ENCODE measurements at regions of chr3 and their contacts with region 1.

Region 1: GRCh38 chr3:194472290-194472920 is 14.4 kb downstream of the ATP13A3 start:
- DNase-seq: no peak
- ATAC-seq: peak in 3 of 4 donors; percentile 41 to 54 (median 51)
- H3K4me3 ChIP-seq: no peak overlapping the region
- H3K27ac ChIP-seq: peak overlapping the region in 3 of 12 donors; percentile 5 to 22 (median 16)
- H3K4me1 ChIP-seq: peaks cover 0 to 81% (median 54%) of the 10 kb centered on the region in 12 donors
- H3K27me3 ChIP-seq: no peaks in the 10 kb centered on the region
- CTCF ChIP-seq: peak; percentile 93 to 99 (median 97)
- POLR2A ChIP-seq: no peak

Region 2: DNA sequence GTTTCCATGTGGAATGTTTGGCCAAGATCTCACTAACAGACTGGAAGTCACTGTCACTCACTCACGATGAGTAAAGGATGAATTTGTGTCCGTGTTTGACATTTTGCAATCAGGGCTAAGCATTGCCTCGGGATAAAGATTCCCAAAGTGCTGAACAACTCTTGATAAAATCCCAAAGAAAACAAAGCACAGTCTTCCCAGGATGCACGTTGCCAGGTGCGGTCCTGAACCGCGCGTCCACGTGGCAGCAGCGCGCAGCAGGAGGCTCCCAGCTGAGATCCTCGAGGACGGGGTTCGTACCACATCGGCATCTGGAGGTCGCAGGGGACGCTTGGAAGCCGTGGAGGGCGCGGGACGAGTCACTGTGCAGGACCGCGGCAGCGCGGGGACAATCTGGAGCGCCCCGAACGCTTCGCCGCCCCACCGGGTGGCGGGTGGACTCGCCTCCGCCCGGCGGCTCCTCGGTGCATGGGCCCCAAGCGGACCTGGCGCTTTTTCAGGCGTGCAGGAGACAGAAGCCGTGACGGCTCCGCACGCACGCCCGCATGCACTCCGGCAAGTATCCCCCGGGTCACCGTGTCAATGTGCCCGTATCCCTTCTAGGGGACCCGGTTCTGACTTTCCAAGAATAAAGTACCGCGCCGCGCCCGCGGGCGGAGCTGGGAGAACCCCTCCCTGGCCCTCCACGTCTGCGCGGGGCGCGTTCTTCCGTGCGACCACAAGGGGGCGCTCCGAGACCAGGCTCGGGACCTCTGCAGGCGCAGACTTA is 139.0 kb before region 1 on chr3:
- intact Hi-C with region 1: no loop called
- DNase-seq: peak; percentile 82 to 94 (median 86)
- ATAC-seq: peak; percentile 87 to 92 (median 90)
- H3K4me3 ChIP-seq: peak overlapping the region in 11 of 12 donors; percentile 3 to 56 (median 46)
- H3K27ac ChIP-seq: no peak overlapping the region
- H3K4me1 ChIP-seq: peaks cover 0 to 28% (median 11%) of the 10 kb centered on the region in 12 donors
- H3K27me3 ChIP-seq: peaks cover 0 to 35% (median 13%) of the 10 kb centered on the region in 9 donors
- CTCF ChIP-seq: peak; percentile 98 to 100 (median 99)
- POLR2A ChIP-seq: no peak

Region 3: DNA sequence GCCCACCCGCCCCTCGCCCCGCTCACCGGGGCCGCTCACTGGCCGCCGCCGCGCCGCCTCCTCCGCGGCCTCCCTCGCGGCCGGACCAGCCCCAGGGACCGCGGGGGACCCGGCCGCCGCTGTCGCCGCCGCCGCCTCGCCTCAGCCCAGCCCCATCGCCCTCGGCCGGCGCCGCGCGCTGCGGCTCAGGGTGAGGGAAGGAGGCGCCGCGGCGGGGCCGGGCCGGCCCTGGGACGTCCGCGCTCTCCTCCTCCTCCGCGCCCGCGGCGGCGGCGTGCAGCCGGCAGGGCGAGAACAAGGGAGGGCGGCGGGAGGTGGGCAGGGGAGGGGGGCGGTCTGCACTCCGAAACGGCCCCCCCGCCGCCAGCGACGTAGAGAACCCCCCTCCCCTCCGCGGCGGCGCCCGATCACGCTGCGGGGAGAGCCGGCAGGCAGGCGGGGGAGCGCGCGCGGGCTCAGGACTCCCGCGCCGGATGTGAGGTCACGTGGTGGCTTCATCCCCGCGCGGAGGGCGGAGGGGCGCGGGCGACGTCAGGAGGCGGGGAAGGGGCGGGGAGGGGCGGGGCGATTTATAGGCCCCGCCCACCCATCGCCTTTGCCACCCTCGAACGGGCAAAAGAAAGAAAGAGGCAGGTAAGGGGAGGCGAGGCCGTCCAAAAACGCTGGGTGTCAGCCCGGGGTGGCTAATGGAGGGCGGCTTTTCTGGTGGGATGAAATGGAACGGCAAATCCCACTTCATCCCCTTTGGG is 14.3 kb after region 1 on chr3 and contains the start of gene ATP13A3:
- intact Hi-C with region 1: loop called in 1 of 10 experiments (anchors 1 kb)
- DNase-seq: peak; percentile 90 to 94 (median 93)
- ATAC-seq: peak; percentile 85 to 96 (median 94)
- H3K4me3 ChIP-seq: peak within 1 kb of the TSS; percentile 57 to 91 (median 72)
- H3K27ac ChIP-seq: peak within 1 kb of the TSS; percentile 74 to 93 (median 91)
- H3K4me1 ChIP-seq: peaks cover 0 to 79% (median 23%) of the 10 kb centered on the region in 12 donors
- H3K27me3 ChIP-seq: no peaks in the 10 kb centered on the region
- CTCF ChIP-seq: peak in 1 of 12 donors; percentile 6
- POLR2A ChIP-seq: peak in 1 of 2 donors; percentile 91
- total RNA-seq, gene ATP13A3: 37.8 to 237 (median 105) TPM

Region 4: GRCh38 chr3:194561306-194561974 is 89.0 kb after region 1 on chr3:
- intact Hi-C with region 1: no loop called
- DNase-seq: no peak
- ATAC-seq: peak in 2 of 4 donors; percentile 34 to 53
- H3K4me3 ChIP-seq: no peak overlapping the region
- H3K27ac ChIP-seq: peak overlapping the region in 2 of 12 donors; percentile 43 to 48
- H3K4me1 ChIP-seq: peaks cover 0 to 19% (median 0%) of the 10 kb centered on the region in 12 donors
- H3K27me3 ChIP-seq: peaks cover 0 to 1% (median 0%) of the 10 kb centered on the region in 9 donors
- CTCF ChIP-seq: no peak
- POLR2A ChIP-seq: no peak

Region 5: GRCh38 chr3:194573691-194574437 is 101.5 kb after region 1 on chr3:
- intact Hi-C with region 1: loop called in 9 of 10 experiments (anchors 1 to 5 kb)
- DNase-seq: peak in 4 of 5 donors; percentile 53 to 68 (median 54)
- ATAC-seq: peak; percentile 48 to 70 (median 66)
- H3K4me3 ChIP-seq: no peak overlapping the region
- H3K27ac ChIP-seq: peak overlapping the region in 7 of 12 donors; percentile 71 to 91 (median 86)
- H3K4me1 ChIP-seq: peaks cover 0 to 80% (median 36%) of the 10 kb centered on the region in 12 donors
- H3K27me3 ChIP-seq: no peaks in the 10 kb centered on the region
- CTCF ChIP-seq: peak; percentile 41 to 68 (median 60)
- POLR2A ChIP-seq: no peak

Region 6: DNA sequence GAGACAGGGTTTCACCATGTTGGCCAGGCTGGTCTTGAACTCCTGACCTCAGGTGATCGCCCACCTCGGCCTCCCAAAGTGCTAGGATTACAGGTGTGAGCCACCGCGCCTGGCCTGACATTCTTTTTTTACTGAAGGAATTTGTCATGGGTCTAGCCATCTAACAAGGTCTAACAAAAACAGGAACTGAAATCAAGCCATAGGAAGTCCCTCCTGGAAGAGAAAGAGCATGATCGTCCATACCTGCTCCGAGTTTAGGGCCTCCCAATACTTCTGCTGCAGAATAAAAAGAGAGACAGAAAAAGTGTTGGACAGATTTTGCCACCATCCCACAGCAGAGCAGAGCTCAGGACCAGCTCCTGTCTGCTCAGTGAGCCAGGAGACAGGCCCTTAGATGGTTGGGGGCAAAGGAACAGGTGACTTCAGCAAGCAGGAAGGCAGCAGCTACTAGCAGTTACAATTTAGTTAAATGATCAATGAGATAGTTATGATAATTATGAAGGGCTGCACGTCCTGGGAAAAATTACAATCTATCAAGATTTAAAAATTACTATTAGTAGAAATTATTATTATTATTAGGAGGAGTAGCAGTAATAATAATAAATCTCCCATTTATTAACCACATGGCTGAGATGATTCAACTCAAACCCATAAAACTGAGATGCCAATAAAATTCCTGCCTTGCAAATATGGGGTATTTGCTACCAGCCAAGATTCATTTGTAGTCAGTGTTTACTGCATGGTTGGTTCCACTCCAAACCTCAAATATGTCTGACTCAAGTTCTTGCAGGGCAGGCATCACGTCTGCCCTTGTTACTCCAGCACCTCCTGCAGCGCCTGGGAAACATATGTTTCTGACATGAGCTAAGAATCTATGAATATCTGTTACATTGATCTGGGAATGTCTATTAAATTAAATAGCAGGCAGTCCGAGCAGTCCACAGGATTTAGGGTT is 120.7 kb after region 1 on chr3:
- intact Hi-C with region 1: loop called in 9 of 10 experiments (anchors 1 to 5 kb)
- DNase-seq: no peak
- ATAC-seq: peak in 3 of 4 donors; percentile 38 to 60 (median 55)
- H3K4me3 ChIP-seq: no peak overlapping the region
- H3K27ac ChIP-seq: peak overlapping the region in 2 of 12 donors; percentile 20 to 23
- H3K4me1 ChIP-seq: peaks cover 0 to 26% (median 5%) of the 10 kb centered on the region in 12 donors
- H3K27me3 ChIP-seq: no peaks in the 10 kb centered on the region
- CTCF ChIP-seq: no peak
- POLR2A ChIP-seq: no peak

Region 7: DNA sequence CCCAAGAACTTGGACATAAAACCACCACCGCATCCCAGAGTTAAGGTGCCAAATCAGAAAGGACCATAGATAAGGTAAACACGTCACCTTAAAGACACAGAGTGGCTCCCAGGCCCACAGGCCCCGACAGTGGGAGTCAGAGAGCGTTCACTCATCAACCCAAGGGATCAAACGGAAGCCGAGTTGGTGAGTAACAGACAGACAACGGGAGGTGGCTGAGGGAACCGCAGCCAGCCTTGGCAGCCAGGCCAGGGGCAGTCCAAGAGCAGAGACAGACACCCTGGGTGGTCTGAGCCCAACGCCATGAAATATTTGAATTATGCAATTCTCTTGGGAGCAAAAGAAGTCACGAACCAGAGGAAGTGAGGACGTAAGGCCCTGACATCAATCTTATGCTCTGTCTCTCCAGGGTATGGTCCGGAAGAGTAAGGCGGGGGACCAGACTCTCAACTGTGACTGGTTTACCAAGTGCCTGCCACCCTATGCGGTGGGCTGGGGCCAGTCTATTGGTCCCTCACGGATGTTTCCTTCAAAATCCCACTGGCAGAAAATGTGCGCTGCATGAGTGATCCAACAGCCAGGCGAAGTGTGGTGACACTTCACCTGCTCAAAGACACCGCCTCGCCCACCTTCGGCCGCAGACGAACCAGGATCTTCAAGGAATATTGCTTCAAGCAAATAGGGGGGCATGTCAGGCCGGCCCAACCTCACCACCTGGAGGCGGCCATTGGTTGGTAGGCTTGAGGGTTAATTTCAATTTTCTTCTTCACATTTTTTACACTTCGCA is 126.6 kb after region 1 on chr3:
- intact Hi-C with region 1: loop called in 8 of 10 experiments (anchors 1 to 5 kb)
- DNase-seq: peak in 1 of 5 donors; percentile 57
- ATAC-seq: peak in 2 of 4 donors; percentile 70 to 78
- H3K4me3 ChIP-seq: no peak overlapping the region
- H3K27ac ChIP-seq: no peak overlapping the region
- H3K4me1 ChIP-seq: peaks cover 0 to 5% (median 0%) of the 10 kb centered on the region in 12 donors
- H3K27me3 ChIP-seq: no peaks in the 10 kb centered on the region
- CTCF ChIP-seq: no peak
- POLR2A ChIP-seq: no peak

Measured in heart left ventricle (tissue), 16 donors.